ENCODE measurements at regions of chr6 and their contacts with region 1.

Region 1: GRCh38 chr6:53294095-53294494 is 54.7 kb downstream of the ELOVL5 start:
- DNase-seq: peak in 1 of 9 donors; percentile 7
- ATAC-seq: no peak
- H3K4me3 ChIP-seq: no peak overlapping the region
- H3K4me3 Mint-ChIP-seq: peak overlapping the region in 1 of 10 donors; percentile 10
- H3K27ac ChIP-seq: no peak overlapping the region
- H3K27ac Mint-ChIP-seq: peak overlapping the region in 8 of 9 donors; percentile 41 to 86 (median 74)
- H3K4me1 ChIP-seq: peaks cover 35 to 41% of the 10 kb centered on the region in 2 donors
- H3K4me1 Mint-ChIP-seq: peaks cover 46 to 94% (median 83%) of the 10 kb centered on the region in 7 donors
- H3K27me3 ChIP-seq: no peaks in the 10 kb centered on the region
- H3K27me3 Mint-ChIP-seq: no peaks in the 10 kb centered on the region

Region 2: GRCh38 chr6:53189554-53189953 is 104.5 kb before region 1 on chr6:
- CTCF ChIA-PET with region 1: no interaction called
- POLR2A ChIA-PET with region 1: no interaction called
- intact Hi-C with region 1: loop called in 1 of 2 experiments (anchors 1 kb)
- DNase-seq: no peak
- ATAC-seq: no peak
- H3K4me3 ChIP-seq: no peak overlapping the region
- H3K4me3 Mint-ChIP-seq: no peak overlapping the region
- H3K27ac ChIP-seq: no peak overlapping the region
- H3K27ac Mint-ChIP-seq: no peak overlapping the region
- H3K4me1 ChIP-seq: peaks cover 12 to 26% of the 10 kb centered on the region in 2 donors
- H3K4me1 Mint-ChIP-seq: peaks cover 8 to 39% (median 29%) of the 10 kb centered on the region in 7 donors
- H3K27me3 ChIP-seq: no peaks in the 10 kb centered on the region
- H3K27me3 Mint-ChIP-seq: peaks cover 0 to 2% (median 0%) of the 10 kb centered on the region in 5 donors

Region 3: DNA sequence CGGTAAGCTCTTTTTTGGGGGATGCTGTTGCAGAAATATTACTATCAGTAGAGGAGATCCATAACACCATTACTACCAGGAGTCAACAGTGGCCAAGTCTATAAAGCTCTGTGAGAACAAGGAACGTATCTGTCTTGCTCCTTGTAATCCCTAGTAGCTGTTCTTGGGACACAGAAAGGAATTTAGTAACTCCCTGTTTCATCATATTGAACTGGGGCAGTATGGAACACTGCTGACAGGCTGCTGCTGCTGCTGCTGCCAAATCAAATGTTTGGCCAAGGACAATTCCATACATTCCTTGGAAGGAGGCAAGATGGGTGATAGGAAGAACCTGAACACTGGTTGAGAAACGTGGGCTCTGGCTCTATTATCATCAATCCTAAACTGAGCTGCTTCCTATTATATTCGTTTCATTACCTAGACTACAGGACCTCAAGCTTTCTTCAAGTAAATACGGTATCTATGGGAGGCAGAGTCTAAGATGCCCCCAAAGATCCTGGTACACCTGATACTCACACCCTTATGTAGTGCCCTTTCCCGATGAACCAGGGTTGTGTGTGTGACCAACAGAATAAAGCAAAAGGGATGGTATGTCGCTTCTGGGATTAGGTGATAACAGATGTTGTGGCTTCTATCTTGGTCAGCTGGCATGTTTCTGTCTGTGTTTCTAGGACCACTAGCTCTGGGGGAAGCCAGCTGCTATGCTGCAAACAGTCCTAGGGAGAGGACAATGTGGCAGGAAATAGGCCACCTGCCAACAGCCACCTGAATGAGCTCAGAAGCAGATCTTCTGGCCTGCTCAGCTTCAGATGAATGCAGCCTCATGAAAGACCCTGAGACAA is 15.2 kb after region 1 on chr6:
- CTCF ChIA-PET with region 1: interaction called, 4 read pairs
- POLR2A ChIA-PET with region 1: interaction called, 4 read pairs
- intact Hi-C with region 1: loop called in 1 of 2 experiments (anchors 1 kb)
- DNase-seq: peak in 1 of 9 donors; percentile 23
- ATAC-seq: peak; percentile 56
- H3K4me3 ChIP-seq: no peak overlapping the region
- H3K4me3 Mint-ChIP-seq: peak overlapping the region in 6 of 10 donors; percentile 3 to 46 (median 18)
- H3K27ac ChIP-seq: no peak overlapping the region
- H3K27ac Mint-ChIP-seq: peak overlapping the region in 8 of 9 donors; percentile 45 to 76 (median 62)
- H3K4me1 ChIP-seq: peaks cover 40 to 77% of the 10 kb centered on the region in 2 donors
- H3K4me1 Mint-ChIP-seq: peaks cover 49 to 85% (median 80%) of the 10 kb centered on the region in 7 donors
- H3K27me3 ChIP-seq: no peaks in the 10 kb centered on the region
- H3K27me3 Mint-ChIP-seq: no peaks in the 10 kb centered on the region

Region 4: GRCh38 chr6:53359072-53359842 is 65.2 kb after region 1 on chr6:
- CTCF ChIA-PET with region 1: interaction called, 8 read pairs
- POLR2A ChIA-PET with region 1: interaction called, 10 read pairs
- intact Hi-C with region 1: loop called in 1 of 2 experiments (anchors 1 kb)
- DNase-seq: peak; percentile 79 to 96 (median 89)
- ATAC-seq: peak; percentile 91
- H3K4me3 ChIP-seq: peak overlapping the region; percentile 76
- H3K4me3 Mint-ChIP-seq: peak overlapping the region; percentile 78 to 94 (median 90)
- H3K27ac ChIP-seq: peak overlapping the region; percentile 88
- H3K27ac Mint-ChIP-seq: peak overlapping the region; percentile 87 to 99 (median 98)
- H3K4me1 ChIP-seq: peaks cover 33 to 41% of the 10 kb centered on the region in 2 donors
- H3K4me1 Mint-ChIP-seq: peaks cover 24 to 54% (median 43%) of the 10 kb centered on the region in 7 donors
- H3K27me3 ChIP-seq: no peaks in the 10 kb centered on the region
- H3K27me3 Mint-ChIP-seq: peaks cover 0 to 4% (median 0%) of the 10 kb centered on the region in 5 donors

Region 5: DNA sequence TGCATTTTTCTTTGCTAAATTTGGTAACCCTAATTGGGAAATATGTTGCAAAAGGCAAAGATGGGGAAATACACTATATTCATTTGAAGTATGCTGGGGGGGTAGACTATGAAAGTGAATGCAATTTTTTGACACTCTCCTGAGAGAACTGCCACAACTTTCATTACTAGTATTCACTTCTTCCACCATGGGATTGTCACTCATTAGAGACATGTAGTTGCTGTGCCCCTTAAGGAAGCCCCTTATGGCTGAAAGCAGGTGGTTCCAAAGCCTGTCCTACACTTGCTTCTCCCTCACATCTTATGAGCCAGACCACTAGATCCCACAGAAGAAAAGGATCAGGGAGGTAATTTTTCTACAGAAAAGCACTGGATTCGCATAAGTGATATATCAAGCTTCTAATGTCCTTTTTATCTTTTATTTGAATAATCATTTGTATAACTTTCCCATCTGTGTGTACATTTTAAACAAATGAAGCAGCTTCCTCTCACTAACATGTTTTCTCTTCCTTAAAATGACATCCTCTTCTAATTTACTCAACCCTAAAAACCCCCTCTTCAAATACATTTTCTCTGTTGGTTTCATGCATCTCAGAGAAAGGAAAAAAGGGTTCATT is 167.1 kb after region 1 on chr6:
- CTCF ChIA-PET with region 1: no interaction called
- POLR2A ChIA-PET with region 1: no interaction called
- intact Hi-C with region 1: no loop called
- DNase-seq: no peak
- ATAC-seq: peak; percentile 53
- H3K4me3 ChIP-seq: no peak overlapping the region
- H3K4me3 Mint-ChIP-seq: no peak overlapping the region
- H3K27ac ChIP-seq: no peak overlapping the region
- H3K27ac Mint-ChIP-seq: no peak overlapping the region
- H3K4me1 ChIP-seq: no peaks in the 10 kb centered on the region
- H3K4me1 Mint-ChIP-seq: peaks cover 0 to 7% (median 0%) of the 10 kb centered on the region in 7 donors
- H3K27me3 ChIP-seq: no peaks in the 10 kb centered on the region
- H3K27me3 Mint-ChIP-seq: peaks cover 0 to 7% (median 7%) of the 10 kb centered on the region in 5 donors

Region 6: GRCh38 chr6:53794720-53795253 is 500.7 kb after region 1 on chr6 and contains the start of gene LRRC1:
- CTCF ChIA-PET with region 1: no interaction called
- POLR2A ChIA-PET with region 1: no interaction called
- intact Hi-C with region 1: loop called in 1 of 2 experiments (anchors 10 kb)
- DNase-seq: peak; percentile 61 to 94 (median 76)
- ATAC-seq: peak; percentile 78
- H3K4me3 ChIP-seq: peak within 1 kb of the TSS; percentile 96
- H3K4me3 Mint-ChIP-seq: peak within 1 kb of the TSS; percentile 93 to 98 (median 96)
- H3K27ac ChIP-seq: peak within 1 kb of the TSS; percentile 43
- H3K27ac Mint-ChIP-seq: peak within 1 kb of the TSS in 8 of 9 donors; percentile 75 to 91 (median 86)
- H3K4me1 ChIP-seq: peaks cover 7 to 13% of the 10 kb centered on the region in 2 donors
- H3K4me1 Mint-ChIP-seq: peaks cover 21 to 33% (median 28%) of the 10 kb centered on the region in 7 donors
- H3K27me3 ChIP-seq: peaks cover 0 to 8% of the 10 kb centered on the region in 2 donors
- H3K27me3 Mint-ChIP-seq: peaks cover 7 to 55% (median 18%) of the 10 kb centered on the region in 5 donors
- total RNA-seq, gene LRRC1: 1.2 to 3.6 (median 3.4) TPM